ENCODE measurements at regions of chr21 and their contacts with region 1.

Region 1: GRCh38 chr21:17903029-17903806 is 84.1 kb upstream of the C21orf91 start:
- DNase-seq: peak; percentile 57
- ATAC-seq: peak; percentile 24
- H3K4me3 ChIP-seq: no peak overlapping the region
- H3K4me3 Mint-ChIP-seq: no peak overlapping the region
- H3K27ac ChIP-seq: no peak overlapping the region
- H3K27ac Mint-ChIP-seq: no peak overlapping the region
- H3K4me1 ChIP-seq: peaks cover 0 to 6% of the 10 kb centered on the region in 2 donors
- H3K4me1 Mint-ChIP-seq: peaks cover 8% of the 10 kb centered on the region
- H3K27me3 ChIP-seq: no peaks in the 10 kb centered on the region
- H3K27me3 Mint-ChIP-seq: no peaks in the 10 kb centered on the region
- CTCF ChIP-seq: peak; percentile 72

Region 2: GRCh38 chr21:17673261-17674010 is 229.8 kb before region 1 on chr21:
- CTCF ChIA-PET with region 1: interaction called, 45 read pairs
- POLR2A ChIA-PET with region 1: no interaction called
- intact Hi-C with region 1: no loop called
- DNase-seq: no peak
- ATAC-seq: no peak
- H3K4me3 ChIP-seq: no peak overlapping the region
- H3K4me3 Mint-ChIP-seq: no peak overlapping the region
- H3K27ac ChIP-seq: no peak overlapping the region
- H3K27ac Mint-ChIP-seq: no peak overlapping the region
- H3K4me1 ChIP-seq: no peaks in the 10 kb centered on the region
- H3K4me1 Mint-ChIP-seq: no peaks in the 10 kb centered on the region
- H3K27me3 ChIP-seq: peaks cover 0 to 5% (median 0%) of the 10 kb centered on the region in 4 experiments
- H3K27me3 Mint-ChIP-seq: peaks cover 14% of the 10 kb centered on the region
- CTCF ChIP-seq: no peak

Region 3: GRCh38 chr21:17679002-17679600 is 224.1 kb before region 1 on chr21:
- CTCF ChIA-PET with region 1: interaction called, 45 read pairs
- POLR2A ChIA-PET with region 1: no interaction called
- intact Hi-C with region 1: loop called (anchors 1 kb)
- DNase-seq: peak; percentile 71
- ATAC-seq: peak; percentile 78
- H3K4me3 ChIP-seq: no peak overlapping the region
- H3K4me3 Mint-ChIP-seq: no peak overlapping the region
- H3K27ac ChIP-seq: no peak overlapping the region
- H3K27ac Mint-ChIP-seq: no peak overlapping the region
- H3K4me1 ChIP-seq: no peaks in the 10 kb centered on the region
- H3K4me1 Mint-ChIP-seq: no peaks in the 10 kb centered on the region
- H3K27me3 ChIP-seq: no peaks in the 10 kb centered on the region
- H3K27me3 Mint-ChIP-seq: no peaks in the 10 kb centered on the region
- CTCF ChIP-seq: peak; percentile 92

Region 4: DNA sequence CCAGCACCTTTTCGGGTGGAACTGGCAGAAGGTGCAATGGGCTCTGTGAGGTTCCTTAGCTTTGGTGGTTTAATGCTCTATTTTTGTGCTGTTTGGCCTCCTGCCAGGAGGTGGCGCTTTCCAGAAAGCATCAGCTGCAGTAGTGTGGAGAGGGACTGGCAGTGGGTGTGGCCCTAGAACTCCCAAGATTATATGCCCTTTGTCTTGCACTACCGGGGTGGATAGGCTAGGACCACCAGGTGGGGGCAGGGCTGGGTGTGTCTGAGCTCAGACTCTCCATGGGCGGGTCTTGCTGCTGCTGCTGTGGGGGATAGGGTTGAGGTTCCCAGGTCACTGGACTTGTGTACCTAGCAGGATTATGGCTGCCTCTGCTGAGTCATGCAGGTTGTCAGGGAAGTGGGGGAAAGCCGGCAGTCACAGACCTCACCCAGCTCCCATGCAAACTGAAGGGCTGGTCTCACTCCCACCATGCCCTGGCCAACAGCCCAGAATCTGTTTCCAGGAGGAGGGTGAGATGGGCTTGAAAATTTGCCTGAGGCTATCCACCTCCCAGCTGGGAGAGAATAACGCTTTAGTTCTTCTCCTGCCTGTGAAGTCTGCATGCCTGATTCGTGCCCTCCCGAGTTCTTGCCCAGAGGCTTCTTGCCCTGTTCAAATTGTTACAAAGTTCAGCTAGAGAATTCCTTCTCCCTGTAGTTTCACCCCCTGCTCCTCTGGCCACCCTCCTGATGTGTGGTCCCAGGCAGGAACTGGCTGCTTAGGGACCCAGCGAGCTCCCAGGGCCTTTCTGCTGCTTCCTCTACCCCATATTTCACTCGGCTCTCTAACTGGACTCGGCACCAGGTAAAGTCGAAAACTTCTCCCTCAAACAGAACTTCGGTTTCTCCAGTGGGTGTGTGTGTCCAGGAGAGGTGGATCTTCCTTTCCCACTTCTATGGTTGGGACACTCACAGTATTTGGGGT is 214.0 kb before region 1 on chr21:
- CTCF ChIA-PET with region 1: interaction called, 18 read pairs
- POLR2A ChIA-PET with region 1: no interaction called
- intact Hi-C with region 1: no loop called
- DNase-seq: peak; percentile 30
- ATAC-seq: no peak
- H3K4me3 ChIP-seq: no peak overlapping the region
- H3K4me3 Mint-ChIP-seq: no peak overlapping the region
- H3K27ac ChIP-seq: no peak overlapping the region
- H3K27ac Mint-ChIP-seq: no peak overlapping the region
- H3K4me1 ChIP-seq: peaks cover 2 to 3% of the 10 kb centered on the region in 2 donors
- H3K4me1 Mint-ChIP-seq: peaks cover 6% of the 10 kb centered on the region
- H3K27me3 ChIP-seq: peaks cover 0 to 3% (median 0%) of the 10 kb centered on the region in 4 experiments
- H3K27me3 Mint-ChIP-seq: peaks cover 6% of the 10 kb centered on the region
- CTCF ChIP-seq: peak; percentile 49